ENCODE measurements at regions of chr17 and their contacts with region 1.

Region 1: GRCh38 chr17:57833179-57833939 is 16.5 kb downstream of the MRPS23 start:
- DNase-seq: peak; percentile 76
- ATAC-seq: peak; percentile 93
- H3K4me3 ChIP-seq: peak overlapping the region; percentile 58
- H3K27ac ChIP-seq: no peak overlapping the region; the same call in 1 of the 2 replicates
- H3K4me1 ChIP-seq: 0 out of 2 replicates have a peak, but pooled peaks cover 2% of the 10 kb centered on the region
- H3K27me3 ChIP-seq: no peaks in the 10 kb centered on the region
- CTCF ChIP-seq: peak; percentile 86
- POLR2A ChIP-seq: no peak
- RAD21 ChIP-seq: peak; percentile 79

Region 2: GRCh38 chr17:57121338-57122042 is 711.9 kb before region 1 on chr17:
- CTCF ChIA-PET with region 1: interaction called, 4 read pairs
- POLR2A ChIA-PET with region 1: no interaction called
- dilution Hi-C with region 1: no loop called
- in situ Hi-C with region 1: loop called (anchors 5 kb)
- intact Hi-C with region 1: no loop called
- DNase-seq: peak; percentile 36
- ATAC-seq: peak; percentile 90
- H3K4me3 ChIP-seq: no peak overlapping the region
- H3K27ac ChIP-seq: no peak overlapping the region
- H3K4me1 ChIP-seq: no peaks in the 10 kb centered on the region
- H3K27me3 ChIP-seq: no peaks in the 10 kb centered on the region
- CTCF ChIP-seq: peak; percentile 52
- POLR2A ChIP-seq: no peak
- RAD21 ChIP-seq: peak; percentile 36

Region 3: GRCh38 chr17:57597531-57598453 is 235.6 kb before region 1 on chr17:
- CTCF ChIA-PET with region 1: interaction called, 3 read pairs
- POLR2A ChIA-PET with region 1: no interaction called
- dilution Hi-C with region 1: no loop called
- in situ Hi-C with region 1: no loop called
- intact Hi-C with region 1: loop called (anchors 1 kb)
- DNase-seq: peak; percentile 82
- ATAC-seq: peak; percentile 88
- H3K4me3 ChIP-seq: no peak overlapping the region
- H3K27ac ChIP-seq: no peak overlapping the region
- H3K4me1 ChIP-seq: peaks cover 4% of the 10 kb centered on the region
- H3K27me3 ChIP-seq: no peaks in the 10 kb centered on the region
- CTCF ChIP-seq: peak; percentile 85
- POLR2A ChIP-seq: no peak
- RAD21 ChIP-seq: peak; percentile 85

Region 4: DNA sequence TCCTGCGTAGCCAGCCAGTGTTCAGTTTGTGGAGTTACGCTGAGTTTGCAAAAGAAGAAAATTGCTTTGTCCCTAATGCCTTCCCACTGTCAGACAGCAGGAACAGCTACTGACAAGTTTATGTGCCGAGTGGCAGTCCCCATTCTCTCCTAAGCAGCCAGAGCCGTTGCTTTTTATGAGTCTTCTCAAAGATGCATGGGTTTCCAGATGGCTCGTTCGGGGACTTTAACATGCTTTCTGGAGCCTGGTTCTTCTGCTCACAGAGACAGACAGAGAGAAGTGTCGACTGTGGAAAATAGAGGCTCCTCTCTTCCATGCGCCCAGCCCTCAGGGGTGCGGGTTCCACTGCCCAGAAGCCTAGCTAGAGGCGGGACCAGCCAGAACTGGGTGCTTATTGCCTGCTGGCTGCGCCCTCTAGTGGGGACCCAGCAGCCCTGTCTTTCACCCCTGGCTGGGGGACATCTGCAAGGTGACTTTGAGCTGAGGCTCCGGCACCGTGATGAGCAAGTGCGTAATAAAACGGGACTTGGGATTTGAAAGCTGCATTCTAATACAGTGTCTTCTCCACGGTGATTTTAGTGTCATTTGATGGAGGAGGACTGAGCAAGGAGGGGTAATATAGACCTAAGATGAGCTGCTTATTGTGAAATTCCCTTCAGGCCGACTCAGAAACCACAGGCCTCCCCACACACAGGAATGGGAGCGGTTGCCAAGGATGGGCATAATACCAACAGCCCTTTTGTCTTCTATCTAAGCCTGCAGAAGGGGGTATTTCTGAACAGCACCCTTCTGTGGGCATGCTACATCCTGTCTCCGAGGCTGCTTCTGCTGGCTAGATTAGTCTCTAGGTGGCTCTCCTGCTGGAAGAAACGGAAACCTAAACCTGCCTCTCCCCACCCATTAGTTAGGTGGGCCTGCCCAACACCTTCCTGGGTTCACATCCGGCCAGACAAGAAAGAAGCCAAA is 161.4 kb before region 1 on chr17:
- CTCF ChIA-PET with region 1: no interaction called
- POLR2A ChIA-PET with region 1: no interaction called
- dilution Hi-C with region 1: no loop called
- in situ Hi-C with region 1: no loop called
- intact Hi-C with region 1: loop called (anchors 2 kb)
- DNase-seq: peak; percentile 69
- ATAC-seq: peak; percentile 99
- H3K4me3 ChIP-seq: no peak overlapping the region
- H3K27ac ChIP-seq: no peak overlapping the region
- H3K4me1 ChIP-seq: peaks cover 12% of the 10 kb centered on the region
- H3K27me3 ChIP-seq: no peaks in the 10 kb centered on the region
- CTCF ChIP-seq: peak; percentile 89
- POLR2A ChIP-seq: 0 out of 2 replicates have a peak, but pooled peaks have one; percentile 25
- RAD21 ChIP-seq: peak; percentile 93

Region 5: DNA sequence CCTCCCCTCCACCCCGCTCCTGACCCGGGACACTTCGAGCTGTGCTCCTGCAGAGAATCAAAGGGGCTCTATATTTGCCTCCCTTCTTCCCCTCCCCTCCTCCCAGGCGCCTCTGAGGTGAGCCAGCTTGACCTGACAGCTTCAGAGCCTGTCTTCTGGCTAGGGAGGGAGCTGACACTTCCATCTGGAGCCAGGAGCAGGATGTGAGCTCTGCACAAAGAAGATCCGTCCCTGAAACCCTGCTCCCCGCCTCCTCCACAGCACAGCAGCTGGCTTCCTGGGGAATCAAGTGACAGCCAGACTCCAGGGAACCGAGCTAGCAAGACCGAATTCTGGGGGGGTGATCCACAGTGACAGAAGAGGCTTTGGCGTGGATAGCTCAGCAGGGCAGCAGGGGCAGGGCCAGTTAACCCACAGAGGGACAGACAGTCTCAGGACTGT is 125.5 kb before region 1 on chr17:
- CTCF ChIA-PET with region 1: no interaction called
- POLR2A ChIA-PET with region 1: no interaction called
- dilution Hi-C with region 1: no loop called
- in situ Hi-C with region 1: no loop called
- intact Hi-C with region 1: no loop called
- DNase-seq: peak; percentile 10
- ATAC-seq: peak; percentile 49
- H3K4me3 ChIP-seq: no peak overlapping the region
- H3K27ac ChIP-seq: no peak overlapping the region
- H3K4me1 ChIP-seq: no peaks in the 10 kb centered on the region
- H3K27me3 ChIP-seq: peaks cover 25% of the 10 kb centered on the region
- CTCF ChIP-seq: no peak
- POLR2A ChIP-seq: no peak
- RAD21 ChIP-seq: no peak

Region 6: GRCh38 chr17:57747221-57748017 is 85.9 kb before region 1 on chr17:
- CTCF ChIA-PET with region 1: no interaction called
- POLR2A ChIA-PET with region 1: no interaction called
- dilution Hi-C with region 1: no loop called
- in situ Hi-C with region 1: no loop called
- intact Hi-C with region 1: loop called (anchors 1 kb)
- DNase-seq: peak; percentile 73
- ATAC-seq: peak; percentile 93
- H3K4me3 ChIP-seq: no peak overlapping the region
- H3K27ac ChIP-seq: no peak overlapping the region
- H3K4me1 ChIP-seq: no peaks in the 10 kb centered on the region
- H3K27me3 ChIP-seq: peaks cover 38% of the 10 kb centered on the region
- CTCF ChIP-seq: peak; percentile 91
- POLR2A ChIP-seq: no peak
- RAD21 ChIP-seq: peak; percentile 91